Heart right ventricle (tissue), 16 donors: ENCODE measurements at regions of chr17 and their contacts with region 1.

Region 1: GRCh38 chr17:7444682-7445618 is at the start of gene CHRNB1:
- DNase-seq: peak; percentile 75 to 87
- ATAC-seq: peak; percentile 81 to 93 (median 88)
- H3K4me3 ChIP-seq: peak within 1 kb of the TSS; percentile 4 to 62 (median 52)
- H3K27ac ChIP-seq: peak within 1 kb of the TSS in 8 of 10 donors; percentile 36 to 78 (median 68)
- H3K4me1 ChIP-seq: peaks cover 7 to 39% (median 33%) of the 10 kb centered on the region in 9 donors
- H3K27me3 ChIP-seq: peaks cover 0 to 67% (median 4%) of the 10 kb centered on the region in 7 donors
- CTCF ChIP-seq: peak in 6 of 9 donors; percentile 14 to 30 (median 28)
- total RNA-seq, gene CHRNB1: 5.4 to 13.1 (median 10.3) TPM

Region 2: DNA sequence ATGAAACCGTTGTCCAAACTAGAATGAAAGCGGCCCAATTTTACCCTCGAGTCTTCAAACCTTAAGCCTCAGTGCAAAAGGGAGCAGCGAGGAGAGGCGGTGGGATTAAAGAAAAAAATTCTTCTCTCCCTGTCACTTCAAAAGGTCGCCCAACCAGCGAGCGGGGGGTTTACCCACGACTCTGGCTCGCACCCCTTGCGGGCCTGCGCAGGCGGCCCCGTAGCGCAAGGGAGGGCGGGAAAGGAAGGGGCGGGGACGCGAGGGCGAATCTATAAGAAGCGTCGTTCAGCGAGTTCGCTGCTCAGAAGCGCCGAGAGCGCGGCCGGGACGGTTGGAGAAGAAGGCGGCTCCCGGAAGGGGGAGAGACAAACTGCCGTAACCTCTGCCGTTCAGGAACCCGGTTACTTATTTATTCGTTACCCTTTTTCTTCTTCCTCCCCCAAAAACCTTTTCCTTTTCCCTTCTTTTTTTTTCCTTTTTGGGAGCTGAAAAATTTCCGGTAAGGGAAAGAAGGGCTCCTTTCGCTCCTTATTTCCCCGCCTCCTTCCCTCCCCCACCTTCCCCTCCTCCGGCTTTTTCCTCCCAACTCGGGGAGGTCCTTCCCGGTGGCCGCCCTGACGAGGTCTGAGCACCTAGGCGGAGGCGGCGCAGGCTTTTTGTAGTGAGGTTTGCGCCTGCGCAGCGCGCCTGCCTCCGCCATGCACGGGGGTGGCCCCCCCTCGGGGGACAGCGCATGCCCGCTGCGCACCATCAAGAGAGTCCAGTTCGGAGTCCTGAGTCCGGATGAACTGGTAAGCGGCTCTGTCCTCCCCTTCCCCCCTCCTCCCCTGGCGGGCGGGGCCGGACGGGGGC is 39.3 kb after region 1 on chr17 and contains the start of gene POLR2A:
- intact Hi-C with region 1: loop called in 3 of 10 experiments (anchors 5 kb)
- DNase-seq: peak; percentile 98 to 99
- ATAC-seq: peak; percentile 84 to 93 (median 88)
- H3K4me3 ChIP-seq: peak within 1 kb of the TSS; percentile 55 to 87 (median 68)
- H3K27ac ChIP-seq: peak within 1 kb of the TSS; percentile 91 to 100 (median 100)
- H3K4me1 ChIP-seq: peaks cover 22 to 78% (median 60%) of the 10 kb centered on the region in 9 donors
- H3K27me3 ChIP-seq: no peaks in the 10 kb centered on the region
- CTCF ChIP-seq: no peak
- total RNA-seq, gene POLR2A: 40.5 to 61.7 (median 48.8) TPM

Region 3: DNA sequence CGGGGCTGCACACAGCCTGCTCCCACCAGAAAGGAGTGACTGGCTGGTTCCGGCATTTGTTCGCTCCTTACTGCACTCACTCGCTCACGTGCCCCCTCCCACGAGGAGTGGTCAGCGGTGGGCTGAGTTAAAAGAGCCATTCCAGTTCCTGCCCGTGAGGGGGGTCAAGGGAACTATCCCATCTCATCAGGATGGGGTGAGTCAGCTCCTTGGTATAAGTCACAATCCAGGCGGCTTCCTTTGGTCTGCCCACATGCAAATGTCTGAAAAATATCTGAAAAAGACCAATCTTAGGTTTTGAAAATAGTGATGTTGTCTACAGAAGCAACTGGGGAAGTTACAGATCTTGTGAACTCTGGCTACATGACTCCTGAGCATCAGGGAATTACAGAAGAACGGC is 93.9 kb after region 1 on chr17:
- intact Hi-C with region 1: no loop called
- DNase-seq: no peak
- ATAC-seq: no peak
- H3K4me3 ChIP-seq: no peak overlapping the region
- H3K27ac ChIP-seq: no peak overlapping the region
- H3K4me1 ChIP-seq: peaks cover 0 to under 1% (median 0%) of the 10 kb centered on the region in 9 donors
- H3K27me3 ChIP-seq: no peaks in the 10 kb centered on the region
- CTCF ChIP-seq: no peak

Region 4: GRCh38 chr17:7700510-7700909 is 255.6 kb after region 1 on chr17:
- intact Hi-C with region 1: no loop called
- DNase-seq: no peak
- ATAC-seq: no peak
- H3K4me3 ChIP-seq: no peak overlapping the region
- H3K27ac ChIP-seq: no peak overlapping the region
- H3K4me1 ChIP-seq: peaks cover 7 to 20% (median 15%) of the 10 kb centered on the region in 9 donors
- H3K27me3 ChIP-seq: peaks cover 5 to 39% (median 20%) of the 10 kb centered on the region in 7 donors
- CTCF ChIP-seq: no peak